ENCODE measurements at regions of chr19 and their contacts with region 1.

Region 1: GRCh38 chr19:47243776-47244547 is 12.4 kb upstream of the CCDC9 start:
- DNase-seq: peak; percentile 69 to 94 (median 81)
- ATAC-seq: peak; percentile 44 to 67 (median 66)
- H3K4me3 ChIP-seq: peak overlapping the region; percentile 32 to 34
- H3K4me3 Mint-ChIP-seq: peak overlapping the region in 2 of 3 donors; percentile 51 to 66
- H3K27ac ChIP-seq: peak overlapping the region; percentile 72
- H3K27ac Mint-ChIP-seq: peak overlapping the region; percentile 81 to 89
- H3K4me1 ChIP-seq: peaks cover 38 to 57% of the 10 kb centered on the region in 2 experiments
- H3K4me1 Mint-ChIP-seq: peaks cover 3 to 36% (median 33%) of the 10 kb centered on the region in 3 donors
- H3K27me3 ChIP-seq: peaks cover 6 to 9% of the 10 kb centered on the region in 2 experiments
- H3K27me3 Mint-ChIP-seq: no peaks in the 10 kb centered on the region

Region 2: DNA sequence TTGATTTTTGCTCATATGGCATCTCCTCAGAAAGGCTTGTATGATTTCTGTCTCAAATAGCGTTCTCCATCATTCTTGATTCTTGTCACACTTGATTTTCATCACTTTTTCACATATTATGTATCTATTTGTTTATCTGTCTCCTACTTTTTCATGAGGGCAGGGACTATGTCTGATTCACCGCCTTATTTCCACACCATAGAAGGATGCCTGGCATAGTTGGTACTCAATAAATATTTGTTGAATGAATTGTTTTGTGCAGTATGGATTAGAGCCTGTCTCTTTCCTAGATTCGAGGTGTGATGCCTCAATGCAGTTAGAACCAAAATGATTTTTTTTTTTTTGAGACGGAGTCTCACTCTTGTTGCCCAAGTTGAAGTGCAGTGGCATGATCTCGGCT is 101.2 kb before region 1 on chr19:
- CTCF ChIA-PET with region 1: interaction called, 8 to 23 read pairs
- POLR2A ChIA-PET with region 1: interaction called, 3 to 5 read pairs
- DNase-seq: no peak
- ATAC-seq: no peak
- H3K4me3 ChIP-seq: no peak overlapping the region
- H3K4me3 Mint-ChIP-seq: no peak overlapping the region
- H3K27ac ChIP-seq: no peak overlapping the region
- H3K27ac Mint-ChIP-seq: peak overlapping the region; percentile 13 to 47
- H3K4me1 ChIP-seq: peaks cover 22 to 37% of the 10 kb centered on the region in 2 experiments
- H3K4me1 Mint-ChIP-seq: peaks cover 51 to 63% (median 52%) of the 10 kb centered on the region in 3 donors
- H3K27me3 ChIP-seq: no peaks in the 10 kb centered on the region
- H3K27me3 Mint-ChIP-seq: no peaks in the 10 kb centered on the region

Region 3: DNA sequence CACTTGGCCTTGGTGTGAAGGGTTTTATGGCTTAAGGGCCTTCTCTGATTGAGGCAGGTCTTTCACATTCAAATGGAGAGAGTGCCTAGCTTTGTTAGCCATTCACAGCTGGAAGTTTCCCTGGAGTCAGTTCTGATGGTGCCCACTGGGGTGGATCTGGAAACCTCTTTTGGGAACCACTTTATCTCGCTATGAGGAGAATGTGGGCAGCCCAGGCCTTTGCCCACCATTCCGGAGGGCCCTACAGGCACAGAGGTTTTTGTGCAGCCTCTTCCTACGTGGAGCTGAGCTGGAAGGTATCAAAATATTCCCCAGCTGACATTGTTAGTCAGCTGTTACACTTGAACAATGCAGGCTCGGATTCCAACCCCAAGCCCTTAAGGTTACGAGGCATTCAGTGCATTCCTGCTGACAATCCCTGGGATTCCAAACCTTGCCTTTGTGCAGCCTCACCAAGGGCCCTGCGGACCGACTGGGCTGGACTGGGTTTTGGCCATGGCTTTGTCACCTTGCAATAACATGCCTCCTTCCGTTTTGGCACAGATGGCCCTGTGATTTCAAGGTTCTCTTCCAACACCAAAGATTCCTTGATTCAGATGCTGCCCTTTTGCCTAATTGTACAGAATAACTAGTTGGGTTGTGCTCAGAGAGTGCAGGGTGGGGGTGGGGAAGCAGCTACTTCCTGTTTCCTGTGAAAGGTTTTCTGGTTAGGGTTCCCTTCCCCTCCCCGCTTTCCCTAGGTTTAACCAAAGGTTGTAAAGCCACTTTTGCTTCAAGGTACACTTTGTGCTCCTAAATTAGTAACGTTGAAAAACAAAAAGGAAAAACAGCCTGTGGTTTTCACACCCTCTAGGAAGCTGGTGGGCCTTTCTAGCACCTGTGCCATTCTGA is 86.3 kb before region 1 on chr19:
- CTCF ChIA-PET with region 1: interaction called in 1 of 2 experiments, 23 read pairs
- POLR2A ChIA-PET with region 1: interaction called in 1 of 2 experiments, 4 read pairs
- DNase-seq: peak in 33 of 35 experiments; percentile 9 to 72 (median 39)
- ATAC-seq: peak; percentile 32 to 50 (median 38)
- H3K4me3 ChIP-seq: peak overlapping the region; percentile 6 to 29
- H3K4me3 Mint-ChIP-seq: peak overlapping the region; percentile 29 to 80 (median 61)
- H3K27ac ChIP-seq: peak overlapping the region; percentile 68
- H3K27ac Mint-ChIP-seq: peak overlapping the region; percentile 92 to 94
- H3K4me1 ChIP-seq: peaks cover 59 to 76% of the 10 kb centered on the region in 2 experiments
- H3K4me1 Mint-ChIP-seq: peaks cover 66 to 74% (median 68%) of the 10 kb centered on the region in 3 donors
- H3K27me3 ChIP-seq: no peaks in the 10 kb centered on the region
- H3K27me3 Mint-ChIP-seq: no peaks in the 10 kb centered on the region

Region 4: DNA sequence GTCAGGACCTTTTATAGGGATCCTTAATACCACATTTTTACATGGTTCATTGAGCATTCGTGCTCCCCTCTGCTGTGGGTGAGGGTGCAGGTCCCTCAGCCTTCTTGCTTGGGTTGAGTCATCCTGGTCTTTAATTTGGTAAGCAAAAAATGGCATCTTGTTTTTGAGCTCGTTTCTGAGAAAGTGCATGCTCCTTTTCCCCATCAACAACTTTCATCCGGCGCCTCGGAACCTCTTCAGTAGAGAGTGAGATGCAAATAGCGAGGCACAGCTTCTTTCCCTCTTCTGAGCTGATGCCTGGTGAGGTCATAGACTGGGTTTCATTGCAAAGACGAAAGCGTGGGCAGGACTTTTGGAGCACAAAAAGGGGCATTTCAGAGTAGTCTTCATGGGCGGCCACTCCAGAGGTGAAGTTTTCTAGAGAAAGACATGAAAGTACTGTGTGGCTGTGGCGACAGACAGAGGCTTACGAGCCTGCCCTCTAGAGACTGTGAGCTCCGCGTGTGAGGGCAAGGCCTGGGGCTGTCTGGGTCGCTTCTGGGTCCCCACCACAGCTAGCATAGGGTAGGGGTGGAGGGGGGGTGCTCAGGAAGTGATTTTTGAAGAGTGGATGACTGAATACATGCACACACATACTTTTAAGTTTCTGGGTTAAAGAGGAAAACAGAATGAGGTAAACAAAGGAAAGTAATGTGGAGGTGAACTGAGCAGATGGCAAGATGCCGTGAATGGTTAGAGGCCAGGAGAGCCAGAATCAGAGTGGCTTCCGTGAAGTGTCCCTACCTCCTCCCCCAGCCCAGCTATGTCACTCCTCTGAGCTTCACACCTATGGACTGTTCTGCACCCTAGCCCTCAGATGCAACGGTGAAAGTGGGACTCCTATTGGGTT is 57.3 kb before region 1 on chr19:
- CTCF ChIA-PET with region 1: interaction called, 3 to 24 read pairs
- POLR2A ChIA-PET with region 1: no interaction called
- DNase-seq: peak; percentile 61 to 89 (median 81)
- ATAC-seq: peak; percentile 81 to 90 (median 86)
- H3K4me3 ChIP-seq: peak overlapping the region; percentile 8 to 18
- H3K4me3 Mint-ChIP-seq: peak overlapping the region; percentile 62 to 73 (median 72)
- H3K27ac ChIP-seq: peak overlapping the region; percentile 82
- H3K27ac Mint-ChIP-seq: peak overlapping the region; percentile 97 to 98
- H3K4me1 ChIP-seq: peaks cover 78 to 92% of the 10 kb centered on the region in 2 experiments
- H3K4me1 Mint-ChIP-seq: peaks cover 87 to 89% (median 88%) of the 10 kb centered on the region in 3 donors
- H3K27me3 ChIP-seq: no peaks in the 10 kb centered on the region
- H3K27me3 Mint-ChIP-seq: no peaks in the 10 kb centered on the region

Region 5: GRCh38 chr19:47225746-47226425 is 18.1 kb before region 1 on chr19:
- CTCF ChIA-PET with region 1: interaction called, 3 to 23 read pairs
- POLR2A ChIA-PET with region 1: interaction called in 1 of 2 experiments, 3 read pairs
- DNase-seq: peak; percentile 68 to 94 (median 82)
- ATAC-seq: peak; percentile 61 to 63 (median 62)
- H3K4me3 ChIP-seq: peak overlapping the region in 1 of 2 donors; percentile 53
- H3K4me3 Mint-ChIP-seq: peak overlapping the region in 2 of 3 donors; percentile 41 to 74
- H3K27ac ChIP-seq: peak overlapping the region; percentile 54
- H3K27ac Mint-ChIP-seq: peak overlapping the region; percentile 74 to 92
- H3K4me1 ChIP-seq: peaks cover 27 to 44% of the 10 kb centered on the region in 2 experiments
- H3K4me1 Mint-ChIP-seq: peaks cover 12 to 16% (median 16%) of the 10 kb centered on the region in 3 donors
- H3K27me3 ChIP-seq: peaks cover 0 to 2% of the 10 kb centered on the region in 2 experiments
- H3K27me3 Mint-ChIP-seq: no peaks in the 10 kb centered on the region